Breast epithelium (tissue), 4 donors: ENCODE measurements at regions of chr12 and their contacts with region 1.

Region 1: DNA sequence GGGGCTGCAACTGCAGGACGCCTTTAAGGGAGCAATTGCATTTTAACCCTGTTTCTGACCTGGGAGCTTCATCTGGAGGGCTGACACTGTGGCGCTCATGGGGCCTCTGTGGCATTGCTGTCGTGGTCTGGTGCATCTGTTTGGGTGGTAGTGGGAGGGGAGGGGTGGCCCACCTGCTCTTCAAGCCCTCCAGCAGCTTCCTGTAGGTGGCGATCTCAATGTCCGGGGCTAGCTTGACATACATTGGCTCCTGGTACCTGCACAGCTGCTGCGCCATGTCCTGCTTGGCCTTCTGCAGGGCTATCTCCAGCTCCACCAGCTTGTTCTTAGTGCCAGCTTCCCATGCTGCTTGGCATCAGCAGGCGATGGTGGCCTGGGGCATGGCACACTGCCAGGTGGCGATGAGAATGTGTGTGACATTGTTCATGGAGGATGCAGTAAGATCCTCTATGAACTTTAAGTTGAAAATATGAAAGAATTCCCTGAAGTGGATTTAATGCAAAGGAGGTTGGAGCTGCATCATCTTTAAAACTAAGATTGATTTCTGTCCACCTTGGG is 7.7 kb upstream of the KRT82 start:
- DNase-seq: no peak
- H3K4me3 ChIP-seq: no peak overlapping the region
- H3K27ac ChIP-seq: no peak overlapping the region
- H3K4me1 ChIP-seq: no peaks in the 10 kb centered on the region
- H3K27me3 ChIP-seq: no peaks in the 10 kb centered on the region
- CTCF ChIP-seq: no peak
- POLR2A ChIP-seq: no peak

Region 2: DNA sequence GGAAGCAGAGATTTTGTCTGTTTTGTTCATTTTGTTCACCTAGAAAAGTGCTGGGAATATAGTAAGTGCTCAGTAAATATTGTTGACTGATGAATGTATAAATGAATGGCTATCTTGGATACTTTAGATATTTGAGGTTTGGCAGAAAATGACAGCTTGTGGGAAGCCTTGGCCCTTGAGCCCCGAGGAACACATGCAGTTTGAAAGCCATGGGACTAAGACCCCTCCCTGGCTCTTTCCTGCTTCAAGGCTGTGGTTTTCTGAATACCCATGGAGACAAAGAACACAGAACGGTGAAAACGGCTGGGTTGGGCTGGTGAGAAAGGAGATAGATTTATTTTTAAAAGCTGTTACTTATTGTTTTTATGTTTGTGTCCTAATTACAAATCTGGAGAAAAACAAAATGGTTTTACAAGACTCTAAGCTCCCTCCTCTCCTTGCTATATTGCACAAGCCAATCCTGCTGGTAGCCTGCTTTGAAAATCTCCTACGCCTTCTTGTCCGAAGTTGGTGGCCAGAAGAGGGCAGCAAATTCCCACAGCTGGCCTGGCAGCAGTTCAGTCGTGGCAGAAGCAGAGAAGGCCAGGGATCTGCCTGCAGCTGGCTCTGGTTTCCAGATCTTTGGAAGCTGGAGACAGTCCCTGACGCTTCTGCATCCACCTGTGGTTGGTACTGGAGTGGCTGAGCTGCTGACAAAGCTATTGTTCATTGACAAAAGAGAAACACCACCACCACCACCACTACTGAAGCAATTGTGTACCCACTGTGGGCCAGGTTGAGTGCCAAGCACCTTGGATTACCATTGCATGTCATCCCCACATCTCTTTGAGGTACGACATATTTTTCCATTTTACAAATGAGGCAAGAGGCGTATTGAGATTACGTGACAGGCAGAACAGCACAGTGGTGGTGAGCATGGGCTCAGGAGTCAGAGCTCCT is 41.4 kb before region 1 on chr12:
- intact Hi-C with region 1: loop called (anchors 2 kb)
- DNase-seq: peak; percentile 89 to 91
- H3K4me3 ChIP-seq: no peak overlapping the region
- H3K27ac ChIP-seq: peak overlapping the region; percentile 67 to 76
- H3K4me1 ChIP-seq: no peaks in the 10 kb centered on the region
- H3K27me3 ChIP-seq: no peaks in the 10 kb centered on the region
- CTCF ChIP-seq: peak; percentile 79 to 88 (median 84)
- POLR2A ChIP-seq: no peak

Region 3: GRCh38 chr12:52691076-52691840 is 277.4 kb after region 1 on chr12:
- intact Hi-C with region 1: no loop called
- DNase-seq: peak in 1 of 2 donors; percentile 49
- H3K4me3 ChIP-seq: peak overlapping the region; percentile 8 to 66 (median 43)
- H3K27ac ChIP-seq: no peak overlapping the region
- H3K4me1 ChIP-seq: no peaks in the 10 kb centered on the region
- H3K27me3 ChIP-seq: peaks cover 0 to 7% of the 10 kb centered on the region in 2 donors
- CTCF ChIP-seq: no peak
- POLR2A ChIP-seq: no peak

Region 4: DNA sequence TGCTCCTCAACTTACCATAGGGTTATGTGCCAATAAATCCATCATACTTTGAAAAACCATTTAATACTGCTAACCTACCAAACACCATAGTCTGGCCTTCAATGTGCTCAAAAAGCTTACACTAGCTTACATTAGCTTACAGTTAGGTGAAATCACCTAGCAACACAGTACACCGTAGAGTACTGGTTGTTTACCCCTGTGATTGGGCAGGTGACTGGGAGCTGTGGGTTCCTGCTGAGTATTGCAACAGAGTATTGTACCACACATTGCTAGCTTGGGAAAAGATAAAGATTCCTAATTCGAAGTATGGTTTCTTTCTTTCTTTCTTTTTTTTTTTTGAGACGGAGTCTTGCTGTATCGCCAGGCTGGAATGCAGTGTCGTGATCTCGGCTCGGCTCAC is 1256.4 kb after region 1 on chr12:
- intact Hi-C with region 1: no loop called
- DNase-seq: no peak
- H3K4me3 ChIP-seq: no peak overlapping the region
- H3K27ac ChIP-seq: peak overlapping the region; percentile 55 to 68
- H3K4me1 ChIP-seq: peaks cover 0 to 9% of the 10 kb centered on the region in 2 donors
- H3K27me3 ChIP-seq: no peaks in the 10 kb centered on the region
- CTCF ChIP-seq: no peak
- POLR2A ChIP-seq: no peak